ENCODE measurements at regions of chr16 and their contacts with region 1.

Region 1: GRCh38 chr16:77236063-77236511 is 36.9 kb downstream of the SYCE1L start:
- DNase-seq: peak; percentile 65
- H3K4me3 ChIP-seq: peak overlapping the region; percentile 17; the same call in 1 of the 2 replicates
- H3K27ac ChIP-seq: no peak overlapping the region
- H3K27me3 ChIP-seq: no peaks in the 10 kb centered on the region
- CTCF ChIP-seq: peak; percentile 100

Region 2: GRCh38 chr16:77223184-77223583 is 12.9 kb before region 1 on chr16:
- CTCF ChIA-PET with region 1: interaction called, 19 read pairs
- POLR2A ChIA-PET with region 1: no interaction called
- DNase-seq: no peak
- H3K4me3 ChIP-seq: no peak overlapping the region
- H3K27ac ChIP-seq: no peak overlapping the region
- H3K27me3 ChIP-seq: peaks cover 4% of the 10 kb centered on the region
- CTCF ChIP-seq: 0 out of 2 replicates have a peak, but pooled peaks have one; percentile 18

Region 3: DNA sequence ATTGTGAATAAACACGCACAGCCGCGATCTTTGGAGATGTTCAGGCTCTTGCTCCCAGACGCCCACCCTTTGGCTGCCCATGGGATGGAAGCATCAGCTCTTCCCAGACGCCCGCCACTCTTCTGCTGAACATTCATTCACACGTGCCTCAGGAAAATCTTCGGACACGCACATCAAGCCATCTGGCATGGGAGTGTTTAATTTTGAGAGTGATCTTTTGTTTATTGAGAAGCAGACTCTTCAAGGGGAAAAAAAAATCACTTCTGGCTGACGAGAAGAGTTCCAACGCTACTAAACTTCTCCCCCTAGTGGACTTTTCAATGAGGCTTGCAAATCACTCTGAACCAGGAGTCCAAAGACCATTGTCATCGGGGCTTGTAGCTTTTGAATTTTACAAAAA is 424.2 kb after region 1 on chr16:
- CTCF ChIA-PET with region 1: interaction called, 21 read pairs
- POLR2A ChIA-PET with region 1: no interaction called
- DNase-seq: peak; percentile 11
- H3K4me3 ChIP-seq: no peak overlapping the region
- H3K27ac ChIP-seq: no peak overlapping the region
- H3K27me3 ChIP-seq: no peaks in the 10 kb centered on the region
- CTCF ChIP-seq: peak; percentile 78

Region 4: DNA sequence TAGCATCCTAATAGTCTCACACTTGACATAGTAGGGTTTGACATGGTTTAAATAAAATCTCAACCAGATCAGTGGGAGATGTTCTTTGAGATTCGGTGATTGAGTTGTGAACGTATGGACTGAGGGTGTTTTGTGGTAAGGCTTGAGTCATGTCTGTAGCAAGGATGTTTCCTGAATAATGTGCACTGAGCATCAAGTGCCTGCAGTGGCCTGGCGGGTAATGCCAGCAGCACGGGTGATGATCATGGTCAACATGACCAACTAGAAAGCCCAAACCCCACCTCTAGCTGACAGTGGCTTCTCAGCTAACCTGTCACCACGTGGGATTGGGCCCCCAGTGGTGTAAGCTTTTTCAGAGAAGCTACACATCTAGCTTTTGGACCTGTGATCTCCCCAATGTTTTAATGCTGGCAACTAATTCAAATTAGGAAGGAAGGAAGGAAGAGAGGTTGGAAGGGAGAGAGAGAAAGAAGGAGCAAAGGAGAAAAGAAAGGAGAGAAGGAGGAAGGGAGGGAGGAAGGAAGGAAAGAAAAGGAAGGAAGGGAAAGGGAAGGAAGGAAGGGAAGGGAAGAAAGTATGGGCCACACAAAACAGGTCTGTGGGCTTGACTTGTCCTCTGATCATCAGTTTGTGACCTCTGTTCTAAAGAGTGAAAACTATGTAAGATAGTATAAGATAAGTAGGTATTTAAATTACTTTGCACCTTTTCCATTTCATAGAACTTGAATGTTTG is 918.8 kb after region 1 on chr16:
- CTCF ChIA-PET with region 1: interaction called, 16 read pairs
- POLR2A ChIA-PET with region 1: no interaction called
- DNase-seq: no peak
- H3K4me3 ChIP-seq: no peak overlapping the region
- H3K27ac ChIP-seq: no peak overlapping the region
- H3K27me3 ChIP-seq: no peaks in the 10 kb centered on the region
- CTCF ChIP-seq: no peak